K562 (cell line): ENCODE measurements at regions of chr2 and their contacts with region 1.

Region 1: GRCh38 chr2:47386551-47386950 is 16.4 kb upstream of the MSH2 start:
- DNase-seq: no peak
- ATAC-seq: no peak
- H3K4me3 ChIP-seq: no peak overlapping the region
- H3K27ac ChIP-seq: no peak overlapping the region
- H3K4me1 ChIP-seq: no peaks in the 10 kb centered on the region; a peak in 1 of 5 replicates
- H3K27me3 ChIP-seq: no peaks in the 10 kb centered on the region
- CTCF ChIP-seq: no peak
- EP300 ChIP-seq: no peak
- POLR2A ChIP-seq: no peak
- RAD21 ChIP-seq: no peak

Region 2: DNA sequence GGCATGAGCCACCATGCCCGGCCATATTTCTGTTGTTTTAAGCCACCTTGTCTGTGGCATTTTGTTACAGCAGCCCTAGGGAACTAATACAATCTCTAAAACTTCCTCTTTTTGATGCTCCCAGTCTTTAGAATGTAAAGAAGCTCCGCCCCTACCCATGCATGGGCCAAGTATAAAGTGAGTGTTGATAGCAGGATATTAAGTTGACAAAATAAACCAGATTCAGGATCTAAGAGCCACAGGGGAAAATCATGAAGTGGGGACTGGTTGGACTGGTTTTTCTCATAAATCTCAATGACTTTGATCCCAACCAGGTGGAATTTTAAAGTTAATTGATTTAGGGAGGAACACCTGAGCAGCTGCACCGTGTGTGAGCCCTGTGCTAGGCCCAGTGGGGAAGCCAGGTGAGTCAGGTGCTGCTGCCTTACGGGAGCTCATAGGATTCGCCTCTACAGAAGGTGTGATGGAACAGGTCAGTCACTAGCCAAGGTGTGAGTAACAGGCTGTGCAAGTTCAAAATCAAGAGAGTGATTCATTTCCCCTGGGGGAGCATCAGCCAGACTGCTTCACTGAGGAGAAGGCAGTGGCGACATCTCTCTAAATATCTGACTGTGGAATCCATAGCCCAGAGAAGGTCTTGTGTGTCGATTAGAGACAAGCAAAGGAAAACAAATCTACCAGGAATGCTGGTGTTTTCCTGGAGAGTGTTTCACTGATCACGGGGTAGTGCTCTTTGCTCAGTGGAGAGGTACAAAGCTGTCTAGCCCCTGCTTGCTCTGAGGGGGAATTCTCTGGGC is 46.6 kb before region 1 on chr2:
- CTCF ChIA-PET with region 1: interaction called, 44 read pairs
- POLR2A ChIA-PET with region 1: interaction called, 14 read pairs
- in situ Hi-C with region 1: loop called (anchors 5 kb)
- intact Hi-C with region 1: loop called (anchors 1 kb)
- DNase-seq: no peak
- ATAC-seq: no peak
- H3K4me3 ChIP-seq: no peak overlapping the region
- H3K27ac ChIP-seq: peak overlapping the region; percentile 30; the same call in 1 of the 3 replicates
- H3K4me1 ChIP-seq: peaks cover 23 to 28% of the 10 kb centered on the region in 2 experiments
- H3K27me3 ChIP-seq: no peaks in the 10 kb centered on the region
- CTCF ChIP-seq: no peak
- EP300 ChIP-seq: no peak
- POLR2A ChIP-seq: no peak
- RAD21 ChIP-seq: no peak